ENCODE measurements at regions of chr5 and their contacts with region 1.

Region 1: GRCh38 chr5:140664359-140665119 is at the start of gene WDR55:
- DNase-seq: peak; percentile 96 to 98 (median 97)
- ATAC-seq: peak; percentile 98 to 99 (median 98)
- H3K4me3 ChIP-seq: peak within 1 kb of the TSS; percentile 50 to 98 (median 90)
- H3K27ac ChIP-seq: peak within 1 kb of the TSS; percentile 90 to 99 (median 94)
- H3K4me1 ChIP-seq: peaks cover 0 to 34% (median 27%) of the 10 kb centered on the region in 12 donors
- H3K27me3 ChIP-seq: no peaks in the 10 kb centered on the region
- CTCF ChIP-seq: no peak
- POLR2A ChIP-seq: peak; percentile 54 to 80
- total RNA-seq, gene WDR55: 9.6 to 17.5 (median 12.2) TPM

Region 2: DNA sequence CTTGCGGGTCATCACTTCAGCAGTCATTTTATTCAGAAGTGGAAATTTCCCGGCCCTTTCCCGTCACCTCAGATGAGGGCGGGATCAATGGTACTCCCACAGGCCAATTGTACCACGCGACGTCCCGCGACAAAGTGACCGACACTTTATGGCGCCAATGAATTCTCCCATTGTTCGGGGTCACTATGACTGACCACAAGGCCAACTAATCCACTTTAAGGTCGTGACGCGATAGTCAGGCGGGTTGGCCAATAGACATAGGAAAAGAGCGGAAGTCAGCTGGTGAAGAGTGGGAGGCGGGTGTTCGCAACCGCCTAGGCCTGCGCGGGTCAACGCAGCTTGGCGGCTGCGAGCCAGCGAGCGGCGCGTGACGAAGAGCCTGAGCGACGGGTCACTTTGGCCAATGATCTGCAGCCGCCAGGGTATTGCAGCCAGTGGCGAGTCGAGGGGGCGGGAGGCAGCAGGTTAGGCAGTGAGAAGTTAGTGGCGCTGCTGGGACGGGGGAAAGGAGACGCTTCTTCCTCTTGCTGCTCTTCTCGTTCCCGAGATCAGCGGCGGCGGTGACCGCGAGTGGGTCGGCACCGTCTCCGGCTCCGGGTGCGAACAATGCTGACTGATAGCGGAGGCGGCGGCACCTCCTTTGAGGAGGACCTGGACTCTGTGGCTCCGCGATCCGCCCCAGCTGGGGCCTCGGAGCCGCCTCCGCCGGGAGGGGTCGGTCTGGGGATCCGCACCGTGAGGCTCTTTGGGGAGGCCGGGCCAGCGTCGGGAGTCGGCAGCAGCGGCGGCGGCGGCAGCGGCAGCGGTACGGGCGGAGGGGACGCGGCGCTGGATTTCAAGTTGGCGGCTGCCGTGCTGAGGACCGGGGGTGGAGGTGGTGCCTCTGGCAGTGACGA is 262.9 kb before region 1 on chr5 and contains the start of gene ANKHD1:
- intact Hi-C with region 1: loop called in 2 of 10 experiments (anchors 10 kb)
- DNase-seq: peak; percentile 99
- ATAC-seq: peak; percentile 92 to 97 (median 96)
- H3K4me3 ChIP-seq: peak within 1 kb of the TSS; percentile 68 to 100 (median 94)
- H3K27ac ChIP-seq: peak within 1 kb of the TSS; percentile 80 to 98 (median 96)
- H3K4me1 ChIP-seq: peaks cover 12 to 42% (median 30%) of the 10 kb centered on the region in 12 donors
- H3K27me3 ChIP-seq: no peaks in the 10 kb centered on the region
- CTCF ChIP-seq: peak in 2 of 12 donors; percentile 3 to 24
- POLR2A ChIP-seq: peak; percentile 95 to 98
- total RNA-seq, gene ANKHD1: 49.5 to 78.8 (median 63.6) TPM

Region 3: GRCh38 chr5:140678993-140679392 is 14.5 kb after region 1 on chr5:
- intact Hi-C with region 1: no loop called
- DNase-seq: no peak
- ATAC-seq: no peak
- H3K4me3 ChIP-seq: no peak overlapping the region
- H3K27ac ChIP-seq: no peak overlapping the region
- H3K4me1 ChIP-seq: no peaks in the 10 kb centered on the region
- H3K27me3 ChIP-seq: no peaks in the 10 kb centered on the region
- CTCF ChIP-seq: no peak
- POLR2A ChIP-seq: no peak

Region 4: GRCh38 chr5:140690941-140691924 is 26.7 kb after region 1 on chr5 and contains the starts of genes HARS1 and HARS2:
- intact Hi-C with region 1: loop called in 1 of 10 experiments (anchors 2 kb)
- DNase-seq: peak; percentile 89 to 94 (median 92)
- ATAC-seq: peak; percentile 96 to 98 (median 98)
- H3K4me3 ChIP-seq: peak within 1 kb of the TSS; percentile 72 to 98 (median 81)
- H3K27ac ChIP-seq: peak within 1 kb of the TSS; percentile 37 to 95 (median 88)
- H3K4me1 ChIP-seq: peaks cover 10 to 39% (median 27%) of the 10 kb centered on the region in 12 donors
- H3K27me3 ChIP-seq: no peaks in the 10 kb centered on the region
- CTCF ChIP-seq: peak in 3 of 12 donors; percentile 15 to 21 (median 20)
- POLR2A ChIP-seq: peak in 1 of 2 donors; percentile 55
- total RNA-seq, gene HARS1: 31.3 to 43.9 (median 36.0) TPM
- total RNA-seq, gene HARS2: 20.0 to 31.7 (median 24.6) TPM

Measured in heart left ventricle (tissue), 16 donors.